Ovary (tissue), 10 donors: ENCODE measurements at regions of chr15 and their contacts with region 1.

Region 1: DNA sequence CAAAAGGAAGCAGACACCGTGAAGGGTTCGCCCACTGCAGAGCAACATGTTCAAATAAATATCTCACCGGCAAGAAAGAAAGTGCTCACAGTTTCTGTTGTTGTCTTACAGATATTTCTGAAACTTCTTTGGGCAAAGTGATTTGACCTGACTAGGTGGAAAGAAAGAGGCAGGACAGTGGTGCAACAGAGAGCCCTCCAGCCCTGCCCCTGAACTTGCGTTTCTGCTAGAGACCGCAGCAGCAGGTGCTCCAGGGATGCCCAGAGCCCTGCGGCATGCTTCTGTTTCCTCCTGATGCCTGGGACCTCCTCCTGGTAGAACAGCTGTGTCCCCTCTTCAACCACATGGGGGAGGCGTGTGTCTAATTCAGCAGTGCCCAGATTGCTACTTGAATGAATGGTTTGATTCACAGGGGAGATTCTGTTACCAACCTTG is 123.4 kb downstream of the ATP10A start:
- DNase-seq: no peak
- H3K4me3 ChIP-seq: no peak overlapping the region
- H3K27ac ChIP-seq: no peak overlapping the region
- H3K4me1 ChIP-seq: peaks cover 4% of the 10 kb centered on the region
- H3K27me3 ChIP-seq: no peaks in the 10 kb centered on the region
- CTCF ChIP-seq: no peak
- EP300 ChIP-seq: no peak
- POLR2A ChIP-seq: no peak

Region 2: DNA sequence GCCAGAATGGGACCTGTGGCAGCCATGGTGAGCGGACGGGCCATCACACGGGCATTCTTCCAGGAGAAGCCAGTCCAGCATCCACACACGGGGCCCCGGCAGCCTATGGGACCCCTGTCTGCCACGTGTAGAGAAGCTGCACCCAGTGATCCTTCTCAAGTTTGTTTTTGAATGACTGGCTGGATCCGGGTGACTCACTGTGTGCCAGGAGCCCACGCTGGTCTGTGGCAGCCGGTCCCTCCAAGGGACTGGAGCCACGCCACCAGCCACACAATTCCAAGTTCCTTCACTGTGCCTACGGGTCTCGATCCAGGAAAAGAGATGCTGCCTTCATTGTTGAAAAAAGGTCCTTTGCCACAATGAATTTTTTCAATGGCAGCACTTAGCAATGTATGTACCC is 65.3 kb after region 1 on chr15:
- intact Hi-C with region 1: loop called in 1 of 4 experiments (anchors 10 kb)
- DNase-seq: no peak
- H3K4me3 ChIP-seq: no peak overlapping the region
- H3K27ac ChIP-seq: no peak overlapping the region
- H3K4me1 ChIP-seq: no peaks in the 10 kb centered on the region
- H3K27me3 ChIP-seq: no peaks in the 10 kb centered on the region
- CTCF ChIP-seq: no peak
- EP300 ChIP-seq: no peak
- POLR2A ChIP-seq: no peak